Calu3 (cell line): ENCODE measurements at regions of chr17 and their contacts with region 1.

Region 1: DNA sequence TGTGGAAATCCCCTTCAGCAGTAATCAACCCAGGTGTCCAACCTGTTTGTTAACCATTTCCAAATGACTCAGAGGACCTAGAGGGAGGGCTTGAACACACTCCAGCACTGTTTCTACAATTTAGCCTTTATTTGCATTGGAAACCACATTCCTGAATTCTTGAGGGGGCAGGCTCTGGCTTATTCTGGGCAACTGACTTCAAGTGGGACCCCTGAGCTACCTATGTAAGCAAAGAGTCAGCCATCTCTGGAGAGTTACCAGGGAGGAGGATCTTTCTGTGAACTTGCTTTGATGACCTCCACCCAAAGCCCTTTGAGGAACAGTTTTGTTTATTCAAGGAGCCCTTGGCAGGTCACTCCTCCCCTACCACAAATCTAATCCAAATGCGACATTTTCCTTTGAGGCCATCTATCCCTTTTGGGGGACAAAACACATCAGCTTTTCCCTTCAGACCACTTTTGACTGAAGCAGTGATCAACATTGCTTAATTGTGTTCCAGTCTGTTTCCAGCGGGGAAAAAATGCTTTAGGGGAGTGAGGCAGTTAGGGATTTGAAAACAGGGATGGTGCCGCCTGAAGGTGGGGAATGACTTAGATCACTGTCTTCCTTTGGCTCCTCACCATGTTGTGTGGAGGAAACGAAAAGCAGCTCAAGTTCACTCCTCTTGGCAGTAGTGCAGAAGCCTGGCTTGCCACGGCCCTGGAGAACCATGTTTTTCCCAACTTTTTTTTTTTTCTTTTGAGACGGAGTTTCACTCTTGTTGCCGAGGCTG is 46.2 kb downstream of the TUBD1 start:
- DNase-seq: peak; percentile 64
- H3K4me3 Mint-ChIP-seq: peak overlapping the region; percentile 46
- H3K27ac Mint-ChIP-seq: peak overlapping the region; percentile 100
- H3K4me1 Mint-ChIP-seq: peaks cover 29% of the 10 kb centered on the region
- H3K27me3 Mint-ChIP-seq: no peaks in the 10 kb centered on the region
- CTCF ChIP-seq: no peak

Region 2: GRCh38 chr17:59859444-59860025 is 13.0 kb after region 1 on chr17:
- CTCF ChIA-PET with region 1: interaction called, 14 read pairs
- intact Hi-C with region 1: loop called (anchors 1 kb)
- DNase-seq: no peak
- H3K4me3 Mint-ChIP-seq: no peak overlapping the region
- H3K27ac Mint-ChIP-seq: no peak overlapping the region
- H3K4me1 Mint-ChIP-seq: peaks cover 17% of the 10 kb centered on the region
- H3K27me3 Mint-ChIP-seq: no peaks in the 10 kb centered on the region
- CTCF ChIP-seq: no peak